Calu3 (cell line): ENCODE measurements at regions of chr10 and their contacts with region 1.

Region 1: DNA sequence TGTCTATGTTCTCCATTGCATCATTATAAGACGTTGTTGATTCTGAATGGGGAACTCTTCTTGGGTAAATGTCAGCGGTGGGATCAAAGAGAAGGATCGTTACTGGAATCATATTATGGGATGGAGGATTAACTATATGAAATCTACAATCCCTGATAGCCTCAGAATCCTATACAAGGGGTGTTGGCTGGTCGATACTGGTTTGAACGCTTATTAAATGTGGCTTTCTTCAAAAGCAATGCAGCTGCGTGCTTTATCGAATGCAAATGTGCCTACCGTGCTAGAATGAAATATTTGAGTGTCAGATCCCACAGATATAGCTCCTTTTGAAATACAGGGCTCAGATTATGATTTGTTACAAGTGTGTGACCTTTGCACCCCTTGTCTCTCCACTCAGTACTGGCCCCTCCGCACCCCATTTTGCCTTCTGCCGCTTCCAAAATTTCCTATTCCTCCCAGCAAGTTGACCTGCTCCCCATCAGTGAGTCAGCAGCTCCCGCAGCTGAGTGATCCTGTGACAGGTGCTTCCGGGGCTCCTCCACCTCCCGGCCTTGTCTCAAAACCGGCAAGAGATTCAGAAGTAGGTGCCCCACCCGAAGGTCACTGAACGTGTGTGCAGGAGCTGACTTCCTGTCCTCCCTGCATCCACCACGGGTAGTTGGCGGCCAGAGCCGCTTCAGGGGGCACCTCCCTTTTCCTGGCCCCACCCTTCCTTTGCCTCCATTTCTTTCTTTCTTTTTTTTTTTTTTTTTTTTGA is 76.6 kb downstream of the PTPRE start:
- DNase-seq: peak; percentile 52
- H3K4me3 Mint-ChIP-seq: peak overlapping the region; percentile 46
- H3K27ac Mint-ChIP-seq: peak overlapping the region; percentile 73
- H3K4me1 Mint-ChIP-seq: peaks cover 24% of the 10 kb centered on the region
- H3K27me3 Mint-ChIP-seq: no peaks in the 10 kb centered on the region
- CTCF ChIP-seq: no peak

Region 2: DNA sequence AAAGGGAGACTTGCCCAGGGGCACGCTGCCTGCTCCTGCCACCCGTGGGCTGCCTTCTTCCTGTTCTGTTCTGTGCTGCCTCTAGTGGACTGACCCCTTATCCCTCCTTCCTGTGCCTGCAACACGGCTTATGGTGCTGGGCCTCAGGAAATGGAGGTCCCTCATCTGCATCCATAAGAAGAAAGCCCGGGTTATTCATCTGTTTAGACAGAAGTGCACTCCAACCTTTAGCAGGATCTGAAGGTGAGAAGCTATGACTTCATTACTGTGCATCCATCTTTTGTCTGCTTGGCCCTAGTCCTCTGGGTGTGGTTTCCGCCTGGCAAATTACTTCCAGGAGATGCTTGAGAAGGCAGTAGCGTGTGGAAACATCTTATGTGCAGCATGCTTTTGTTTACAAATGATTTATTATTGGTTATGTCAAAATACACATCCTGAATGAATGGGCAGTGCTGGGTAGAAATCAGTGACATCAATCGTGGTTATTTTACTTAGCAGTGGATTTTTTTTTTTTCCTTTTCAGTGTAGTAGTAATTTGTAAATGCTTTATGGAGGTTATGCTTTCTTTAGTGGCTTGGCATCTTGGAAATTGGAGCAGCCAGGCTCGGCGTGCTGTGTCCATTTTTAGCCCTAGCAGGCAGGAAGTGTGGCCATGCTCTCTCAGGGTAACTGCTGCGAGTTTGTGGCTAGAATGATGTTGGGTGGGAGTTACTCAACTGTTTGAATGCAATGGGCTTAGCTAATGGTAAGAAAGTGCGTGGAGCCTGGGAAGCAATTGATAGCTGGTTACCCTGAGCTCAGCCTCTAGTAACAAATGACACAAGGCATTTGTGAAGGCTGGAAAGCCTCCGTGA is 63.9 kb before region 1 on chr10:
- CTCF ChIA-PET with region 1: no interaction called
- intact Hi-C with region 1: loop called (anchors 1 kb)
- DNase-seq: no peak
- H3K4me3 Mint-ChIP-seq: no peak overlapping the region
- H3K27ac Mint-ChIP-seq: no peak overlapping the region
- H3K4me1 Mint-ChIP-seq: peaks cover 11% of the 10 kb centered on the region
- H3K27me3 Mint-ChIP-seq: no peaks in the 10 kb centered on the region
- CTCF ChIP-seq: no peak

Region 3: DNA sequence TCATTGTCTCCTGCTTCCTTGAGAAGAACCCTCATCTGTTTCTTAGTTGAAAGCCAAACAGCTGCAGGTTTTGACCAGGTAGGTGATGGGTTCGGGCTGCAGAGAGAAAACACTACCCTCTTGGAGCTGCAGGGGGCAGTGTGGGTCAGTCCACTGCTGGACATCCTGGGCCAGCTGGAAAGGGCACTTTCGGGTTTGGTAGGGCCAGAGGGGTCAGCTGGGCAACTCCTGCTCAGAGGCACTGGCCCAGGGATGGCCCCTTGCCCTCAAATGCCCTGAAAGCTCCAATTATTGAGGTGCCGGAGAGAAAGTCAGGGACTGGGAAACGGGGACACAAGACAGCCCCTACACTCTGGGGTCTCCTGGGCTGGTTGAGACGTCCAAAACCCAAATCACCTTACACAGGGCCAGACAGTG is 52.0 kb after region 1 on chr10:
- CTCF ChIA-PET with region 1: no interaction called
- intact Hi-C with region 1: no loop called
- DNase-seq: peak; percentile 54
- H3K4me3 Mint-ChIP-seq: no peak overlapping the region
- H3K27ac Mint-ChIP-seq: no peak overlapping the region
- H3K4me1 Mint-ChIP-seq: peaks cover 16% of the 10 kb centered on the region
- H3K27me3 Mint-ChIP-seq: no peaks in the 10 kb centered on the region
- CTCF ChIP-seq: peak; percentile 45